ENCODE measurements at regions of chr11 and their contacts with region 1.

Region 1: DNA sequence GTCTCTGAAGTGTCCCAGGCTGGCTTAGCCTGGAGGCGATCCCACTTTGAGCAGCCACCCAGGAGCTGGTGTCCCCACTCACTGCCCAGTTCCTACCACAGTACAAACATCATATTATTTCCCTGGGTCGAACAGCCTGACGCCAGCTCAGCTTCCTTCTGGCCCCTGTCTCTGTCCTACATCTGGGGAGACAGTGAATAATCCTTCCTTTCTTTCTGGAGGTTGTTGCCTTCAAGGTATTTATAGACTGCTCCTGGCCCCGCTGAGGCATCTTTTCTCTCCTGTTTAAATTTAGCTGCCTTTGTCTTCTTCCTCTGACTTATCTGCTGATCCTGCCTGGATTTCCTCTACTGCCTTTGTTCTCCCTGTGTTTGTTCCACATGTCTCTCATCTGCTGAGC is 56.8 kb upstream of the LRRC55 start:
- DNase-seq: no peak
- ATAC-seq: peak in 3 of 4 donors; percentile 40 to 69 (median 49)
- H3K4me3 ChIP-seq: no peak overlapping the region
- H3K27ac ChIP-seq: no peak overlapping the region
- H3K4me1 ChIP-seq: no peaks in the 10 kb centered on the region
- H3K27me3 ChIP-seq: no peaks in the 10 kb centered on the region
- CTCF ChIP-seq: no peak
- POLR2A ChIP-seq: no peak

Region 2: GRCh38 chr11:56841210-56841810 is 283.6 kb before region 1 on chr11:
- intact Hi-C with region 1: loop called in 1 of 2 experiments (anchors 10 kb)
- DNase-seq: peak in 1 of 3 donors; percentile 52
- ATAC-seq: peak; percentile 87 to 93 (median 88)
- H3K4me3 ChIP-seq: no peak overlapping the region
- H3K27ac ChIP-seq: no peak overlapping the region
- H3K4me1 ChIP-seq: no peaks in the 10 kb centered on the region
- H3K27me3 ChIP-seq: no peaks in the 10 kb centered on the region
- CTCF ChIP-seq: peak; percentile 66 to 79 (median 72)
- POLR2A ChIP-seq: no peak